CD4-positive, alpha-beta T cell (primary cell): ENCODE measurements at regions of chr2 and their contacts with region 1.

Region 1: DNA sequence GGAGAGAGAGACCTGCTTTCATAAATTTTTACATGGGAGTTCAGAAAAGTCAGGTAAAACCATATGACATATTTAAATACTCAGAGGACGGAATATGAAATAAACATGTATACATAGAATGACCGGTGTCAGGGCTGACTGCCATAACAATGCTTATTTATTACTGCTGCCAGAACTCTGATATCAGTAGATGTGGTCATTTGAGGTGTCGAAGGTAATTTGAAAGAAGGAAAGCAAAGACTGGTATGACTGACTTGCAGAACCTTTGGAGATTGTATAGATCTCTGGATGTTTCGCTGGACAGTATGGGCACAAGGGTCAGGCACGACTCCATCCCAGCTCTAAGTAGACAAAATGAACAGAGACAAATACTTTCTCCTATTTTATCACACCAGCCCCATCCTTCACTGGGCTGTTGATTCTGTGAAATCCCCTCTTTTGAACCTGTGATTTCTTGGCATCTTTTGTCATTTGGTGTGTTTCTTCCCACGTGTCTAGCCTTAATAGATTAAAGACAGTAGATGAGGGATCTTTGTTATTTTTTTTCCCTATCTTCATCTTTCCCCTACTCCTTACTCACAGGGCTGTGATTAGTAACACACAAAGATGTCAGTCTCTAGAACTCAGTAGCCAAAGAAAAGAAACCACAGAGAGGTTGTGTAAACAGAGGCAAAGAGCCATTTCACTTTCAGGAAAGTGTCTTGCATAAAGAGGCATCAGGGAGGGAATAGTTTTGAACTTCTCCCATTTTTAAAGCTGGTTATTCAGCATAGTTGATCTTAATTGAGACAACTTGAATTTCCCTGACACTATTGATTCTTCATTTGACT is 61.6 kb downstream of the ICOS start:
- DNase-seq: peak in 3 of 14 experiments; percentile 19 to 54 (median 44)
- ATAC-seq: no peak
- H3K4me3 ChIP-seq: no peak overlapping the region
- H3K4me3 Mint-ChIP-seq: peak overlapping the region; percentile 42
- H3K27ac ChIP-seq: no peak overlapping the region
- H3K27ac Mint-ChIP-seq: peak overlapping the region; percentile 86
- H3K4me1 ChIP-seq: peaks cover 39% of the 10 kb centered on the region
- H3K4me1 Mint-ChIP-seq: peaks cover 77% of the 10 kb centered on the region
- H3K27me3 ChIP-seq: no peaks in the 10 kb centered on the region
- H3K27me3 Mint-ChIP-seq: no peaks in the 10 kb centered on the region
- CTCF ChIP-seq: no peak

Region 2: DNA sequence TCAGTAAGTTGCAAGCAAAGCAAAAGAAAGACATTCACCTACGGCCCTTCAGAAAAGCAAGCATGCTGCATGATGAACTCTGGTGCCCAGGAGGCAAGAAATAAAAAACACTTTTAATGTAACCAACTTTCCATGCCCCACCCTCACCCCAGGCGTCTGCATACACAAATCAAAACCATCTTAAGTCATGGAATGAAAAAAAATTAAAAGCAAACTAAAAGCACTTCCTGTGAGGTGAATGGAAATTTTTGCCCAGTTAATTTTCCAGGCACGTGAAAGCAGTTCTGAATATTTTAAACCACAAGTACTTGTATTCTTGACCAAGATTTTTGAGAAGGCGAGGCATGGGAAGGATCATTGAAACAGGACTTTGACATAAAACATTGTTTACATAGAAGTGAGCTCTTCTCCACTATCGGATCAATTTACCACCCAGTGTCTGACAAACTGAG is 64.1 kb before region 1 on chr2:
- CTCF ChIA-PET with region 1: no interaction called
- POLR2A ChIA-PET with region 1: interaction called, 5 read pairs
- intact Hi-C with region 1: loop called in 1 of 2 experiments (anchors 5 kb)
- DNase-seq: peak in 9 of 14 experiments; percentile 32 to 71 (median 50)
- ATAC-seq: peak; percentile 40
- H3K4me3 ChIP-seq: peak overlapping the region; percentile 19
- H3K4me3 Mint-ChIP-seq: peak overlapping the region; percentile 83
- H3K27ac ChIP-seq: peak overlapping the region; percentile 67 to 82
- H3K27ac Mint-ChIP-seq: peak overlapping the region; percentile 93
- H3K4me1 ChIP-seq: peaks cover 41% of the 10 kb centered on the region
- H3K4me1 Mint-ChIP-seq: peaks cover 72% of the 10 kb centered on the region
- H3K27me3 ChIP-seq: no peaks in the 10 kb centered on the region
- H3K27me3 Mint-ChIP-seq: no peaks in the 10 kb centered on the region
- CTCF ChIP-seq: no peak

Region 3: GRCh38 chr2:204027091-204027490 is 28.9 kb after region 1 on chr2:
- CTCF ChIA-PET with region 1: no interaction called
- POLR2A ChIA-PET with region 1: interaction called, 11 read pairs
- intact Hi-C with region 1: no loop called
- DNase-seq: peak in 6 of 14 experiments; percentile 8 to 72 (median 45)
- ATAC-seq: peak; percentile 78
- H3K4me3 ChIP-seq: no peak overlapping the region
- H3K4me3 Mint-ChIP-seq: no peak overlapping the region
- H3K27ac ChIP-seq: no peak overlapping the region
- H3K27ac Mint-ChIP-seq: peak overlapping the region; percentile 78
- H3K4me1 ChIP-seq: peaks cover 22% of the 10 kb centered on the region
- H3K4me1 Mint-ChIP-seq: peaks cover 29% of the 10 kb centered on the region
- H3K27me3 ChIP-seq: no peaks in the 10 kb centered on the region
- H3K27me3 Mint-ChIP-seq: no peaks in the 10 kb centered on the region
- CTCF ChIP-seq: no peak